Activated naive CD4-positive, alpha-beta T cell treated with anti-CD3 and anti-CD28 coated beads for 36 hours (primary cell): ENCODE measurements at regions of chr17 and their contacts with region 1.

Region 1: GRCh38 chr17:57498443-57498842 is 242.1 kb downstream of the MSI2 start:
- DNase-seq: no peak
- H3K4me3 Mint-ChIP-seq: no peak overlapping the region
- H3K27ac Mint-ChIP-seq: no peak overlapping the region
- H3K4me1 Mint-ChIP-seq: peaks cover 23% of the 10 kb centered on the region
- H3K27me3 Mint-ChIP-seq: no peaks in the 10 kb centered on the region

Region 2: GRCh38 chr17:57925361-57925990 is 427.0 kb after region 1 on chr17:
- CTCF ChIA-PET with region 1: interaction called, 12 read pairs
- intact Hi-C with region 1: no loop called
- DNase-seq: no peak
- H3K4me3 Mint-ChIP-seq: no peak overlapping the region
- H3K27ac Mint-ChIP-seq: no peak overlapping the region
- H3K4me1 Mint-ChIP-seq: no peaks in the 10 kb centered on the region
- H3K27me3 Mint-ChIP-seq: no peaks in the 10 kb centered on the region